ENCODE measurements at regions of chr6 and their contacts with region 1.

Region 1: GRCh38 chr6:46221222-46221793 is 50.5 kb upstream of the ENPP5 start:
- H3K4me3 ChIP-seq: no peak overlapping the region
- H3K27ac ChIP-seq: no peak overlapping the region
- H3K4me1 ChIP-seq: no peaks in the 10 kb centered on the region
- CTCF ChIP-seq: peak; percentile 65; the same call in 1 of the 2 replicates

Region 2: GRCh38 chr6:46160102-46160501 is 61.2 kb before region 1 on chr6:
- CTCF ChIA-PET with region 1: no interaction called
- POLR2A ChIA-PET with region 1: no interaction called
- H3K4me3 ChIP-seq: no peak overlapping the region
- H3K27ac ChIP-seq: no peak overlapping the region
- H3K4me1 ChIP-seq: no peaks in the 10 kb centered on the region
- CTCF ChIP-seq: no peak

Region 3: DNA sequence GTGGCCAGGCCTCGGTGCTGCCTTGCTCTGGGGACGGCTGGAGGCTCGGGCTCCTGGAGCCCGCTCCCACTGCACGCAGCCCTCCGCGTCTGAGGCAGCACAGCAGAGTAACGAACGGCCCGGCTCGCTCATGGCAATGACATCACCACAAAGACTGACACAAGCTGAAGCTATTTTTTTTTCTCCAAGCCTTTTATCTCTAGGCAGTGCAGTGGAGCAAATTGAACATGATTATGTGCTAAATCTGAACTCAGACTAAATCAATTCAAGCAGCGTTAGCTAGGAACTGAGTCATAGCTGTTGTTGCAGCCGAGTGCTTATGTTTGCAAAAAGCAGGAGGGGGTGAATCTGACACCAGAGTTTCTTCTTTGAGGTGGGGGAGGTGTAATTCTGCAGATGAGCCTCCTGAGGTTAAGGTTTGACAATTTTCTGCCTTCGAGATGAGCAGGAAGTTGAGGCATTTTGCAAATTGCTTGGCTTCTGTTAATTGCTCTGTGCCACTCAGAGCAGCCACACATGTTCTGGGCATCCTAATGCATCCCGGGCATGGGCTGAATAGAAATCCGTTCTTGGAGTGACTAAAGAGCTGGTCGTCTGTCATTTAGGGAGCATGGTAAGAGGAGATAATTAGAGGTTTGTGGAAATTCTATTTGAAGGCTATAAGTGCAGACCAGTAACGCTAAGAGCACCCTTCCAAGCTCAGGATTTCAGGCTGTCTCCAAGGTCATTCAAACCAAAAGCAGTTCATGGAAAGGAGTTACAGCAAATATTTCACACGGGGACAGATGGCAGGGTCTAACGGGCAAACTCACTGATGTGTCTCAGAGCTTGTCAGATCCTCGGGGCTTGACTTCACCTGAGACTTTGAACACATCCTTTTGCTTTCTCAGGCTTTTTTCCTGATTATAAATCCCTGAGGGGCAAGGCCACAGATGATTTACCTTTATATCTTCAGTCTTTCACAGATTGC is 104.5 kb after region 1 on chr6:
- CTCF ChIA-PET with region 1: interaction called, 13 read pairs
- POLR2A ChIA-PET with region 1: no interaction called
- H3K4me3 ChIP-seq: peak overlapping the region; percentile 9; the same call in 1 of the 2 replicates
- H3K27ac ChIP-seq: no peak overlapping the region
- H3K4me1 ChIP-seq: peaks cover 8% of the 10 kb centered on the region
- CTCF ChIP-seq: no peak

Region 4: DNA sequence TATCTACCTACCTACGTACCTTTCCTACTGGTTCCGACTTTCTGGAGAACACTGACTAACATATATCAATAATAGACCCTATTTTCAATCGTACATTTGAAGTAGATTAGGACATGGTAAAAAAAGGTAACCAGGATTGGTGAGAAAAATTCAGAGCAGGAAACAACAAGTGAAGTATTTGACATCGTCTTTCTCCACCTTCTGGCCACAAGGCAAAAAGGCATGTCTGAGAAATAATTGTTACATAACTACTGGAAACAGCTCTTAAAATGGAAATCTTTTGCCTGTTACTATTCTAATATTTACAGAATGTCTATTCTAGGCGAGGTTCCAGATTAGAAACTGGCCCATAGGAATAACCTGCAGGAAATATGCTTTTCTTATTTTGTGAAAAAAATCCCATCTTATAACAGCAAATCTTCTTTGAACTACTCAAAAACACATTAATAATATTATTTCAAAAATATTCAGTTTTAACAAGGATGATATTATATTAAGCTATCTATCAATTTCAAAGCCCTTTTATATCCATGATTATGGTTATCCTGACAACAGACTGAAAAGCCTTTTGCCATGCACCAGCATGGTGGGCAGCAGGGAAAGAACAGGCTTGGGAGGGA is 189.1 kb after region 1 on chr6:
- CTCF ChIA-PET with region 1: interaction called, 33 read pairs
- POLR2A ChIA-PET with region 1: no interaction called
- H3K4me3 ChIP-seq: no peak overlapping the region
- H3K27ac ChIP-seq: no peak overlapping the region
- H3K4me1 ChIP-seq: no peaks in the 10 kb centered on the region
- CTCF ChIP-seq: peak; percentile 32; the same call in 1 of the 2 replicates